Motor neuron (in vitro differentiated cells): ENCODE measurements at regions of chr4 and their contacts with region 1.

Region 1: GRCh38 chr4:118974758-118975157 is 86.1 kb downstream of the SYNPO2 start:
- ATAC-seq: no peak
- H3K4me3 ChIP-seq: no peak overlapping the region
- H3K27ac ChIP-seq: no peak overlapping the region
- H3K4me1 ChIP-seq: no peaks in the 10 kb centered on the region

Region 2: DNA sequence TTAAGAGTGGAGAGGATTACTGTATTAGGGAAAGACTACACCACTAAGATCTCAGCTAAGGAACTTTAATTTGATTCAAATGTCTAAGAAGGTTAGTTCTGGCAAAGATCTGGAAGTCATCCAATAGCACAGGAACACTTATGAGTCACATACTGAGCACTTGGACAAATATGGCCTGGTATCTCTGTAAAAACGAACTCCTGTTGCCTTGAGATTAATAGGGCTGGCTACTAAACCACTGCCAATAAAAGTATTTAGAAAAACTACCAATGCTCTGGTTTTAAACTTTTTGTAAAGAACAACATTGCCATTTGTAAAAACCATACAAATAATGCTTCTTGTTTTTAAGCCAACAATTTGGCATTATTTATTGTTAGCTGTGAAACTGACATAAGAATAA is 209.4 kb before region 1 on chr4:
- in situ Hi-C with region 1: loop called in 2 of 9 experiments (anchors 10 to 25 kb)
- ATAC-seq: peak in 3 of 8 experiments; percentile 43 to 96 (median 92)
- H3K4me3 ChIP-seq: no peak overlapping the region
- H3K27ac ChIP-seq: no peak overlapping the region
- H3K4me1 ChIP-seq: no peaks in the 10 kb centered on the region